ENCODE measurements at regions of chr3 and their contacts with region 1.

Region 1: DNA sequence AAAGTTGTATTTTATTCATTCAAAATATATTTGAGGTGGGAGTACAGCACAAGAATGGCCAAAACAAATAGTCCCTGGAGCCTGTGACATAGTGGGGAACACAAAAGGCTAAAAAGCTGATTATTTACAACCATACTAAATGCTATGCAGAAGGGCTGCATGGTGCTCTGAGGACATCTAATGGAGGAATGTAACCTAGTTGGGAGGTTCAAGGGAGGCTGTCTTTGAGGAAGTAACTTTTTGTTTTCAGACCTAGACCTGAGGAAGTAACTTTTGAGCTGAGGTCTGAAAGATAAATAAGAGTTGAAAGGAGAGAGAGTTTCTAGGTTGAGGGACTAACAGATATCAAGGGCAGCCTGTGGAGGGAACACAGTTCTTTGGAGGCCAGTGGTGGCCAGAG is 34.8 kb upstream of the RASA2 start:
- DNase-seq: no peak
- H3K4me3 ChIP-seq: no peak overlapping the region
- H3K27ac ChIP-seq: no peak overlapping the region
- H3K4me1 ChIP-seq: peaks cover 11% of the 10 kb centered on the region
- H3K27me3 ChIP-seq: no peaks in the 10 kb centered on the region
- CTCF ChIP-seq: peak; percentile 65

Region 2: DNA sequence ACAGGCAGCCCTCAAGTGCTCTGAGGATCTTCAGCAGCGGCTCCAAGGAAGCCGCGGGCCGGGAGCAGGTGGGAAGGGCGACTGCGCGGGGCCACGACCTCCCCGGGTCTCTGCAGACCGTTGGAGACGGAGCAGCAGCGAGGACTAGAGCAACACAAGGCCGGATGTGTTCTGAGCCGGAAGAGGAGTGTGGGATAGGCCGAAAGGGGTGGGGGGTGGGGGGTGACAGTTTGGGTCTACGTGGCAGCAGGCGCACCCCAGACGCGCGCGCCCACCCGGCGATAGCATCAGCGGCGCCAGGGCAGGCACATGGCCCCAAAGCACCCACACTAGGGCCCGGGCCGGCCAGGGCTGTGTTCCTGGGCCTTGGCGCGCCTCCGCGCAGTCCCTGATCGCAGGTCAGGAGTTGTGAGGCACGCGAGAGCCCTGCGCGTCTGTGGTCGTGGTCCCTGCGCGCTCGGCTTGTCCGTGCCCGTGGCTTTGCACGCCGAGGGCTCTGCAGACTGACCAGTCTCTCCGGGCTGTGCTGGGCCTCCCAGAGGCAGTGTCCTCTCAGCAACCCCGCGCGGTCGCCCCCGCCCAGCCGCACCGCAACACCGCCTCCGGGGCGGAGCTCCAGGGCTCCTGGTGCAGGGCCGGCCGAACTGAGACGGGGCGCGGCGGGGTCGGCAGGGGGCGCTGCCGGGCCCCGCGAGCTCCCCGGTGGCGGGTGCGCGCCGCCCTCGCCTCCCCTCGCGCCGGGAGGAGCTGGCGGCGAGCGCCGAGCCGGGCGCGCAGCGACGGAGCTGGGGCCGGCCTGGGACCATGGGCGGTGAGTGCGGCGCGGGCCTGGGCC is 220.7 kb before region 1 on chr3 and contains the start of gene PXYLP1:
- intact Hi-C with region 1: loop called (anchors 10 kb)
- DNase-seq: peak; percentile 95
- H3K4me3 ChIP-seq: peak within 1 kb of the TSS; percentile 84
- H3K27ac ChIP-seq: peak within 1 kb of the TSS; percentile 88
- H3K4me1 ChIP-seq: peaks cover 4% of the 10 kb centered on the region
- H3K27me3 ChIP-seq: no peaks in the 10 kb centered on the region
- CTCF ChIP-seq: peak; percentile 36
- total RNA-seq, gene PXYLP1: 8.9 to 13.1 TPM

Region 3: GRCh38 chr3:141255846-141256261 is 196.2 kb before region 1 on chr3:
- intact Hi-C with region 1: no loop called
- DNase-seq: no peak
- H3K4me3 ChIP-seq: no peak overlapping the region
- H3K27ac ChIP-seq: no peak overlapping the region
- H3K4me1 ChIP-seq: no peaks in the 10 kb centered on the region
- H3K27me3 ChIP-seq: no peaks in the 10 kb centered on the region
- CTCF ChIP-seq: no peak

Region 4: DNA sequence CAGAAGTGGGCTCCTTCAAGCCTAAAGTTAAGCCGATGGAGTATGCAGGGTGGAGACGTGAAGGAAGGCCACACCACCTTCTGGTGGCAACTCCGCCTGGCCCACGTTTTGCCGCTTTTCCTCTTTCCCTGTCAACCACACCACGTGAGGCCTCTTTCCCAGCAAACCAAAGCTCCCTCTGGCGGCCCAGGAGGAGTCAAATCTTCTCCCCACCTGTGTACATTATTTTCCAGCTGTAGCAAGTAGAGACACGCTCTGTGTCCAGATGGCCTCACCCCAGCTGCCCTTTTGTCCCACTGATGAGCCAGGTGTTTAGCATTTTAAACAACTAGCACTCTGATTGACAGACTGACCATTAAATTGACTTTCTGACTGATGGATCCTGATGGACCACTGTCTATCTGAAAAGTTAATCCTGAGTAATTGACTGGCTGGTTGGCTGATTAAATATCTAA is 143.4 kb before region 1 on chr3:
- intact Hi-C with region 1: loop called (anchors 5 kb)
- DNase-seq: peak; percentile 84
- H3K4me3 ChIP-seq: no peak overlapping the region
- H3K27ac ChIP-seq: no peak overlapping the region
- H3K4me1 ChIP-seq: no peaks in the 10 kb centered on the region
- H3K27me3 ChIP-seq: no peaks in the 10 kb centered on the region
- CTCF ChIP-seq: peak; percentile 27

Region 5: GRCh38 chr3:141355242-141355641 is 96.8 kb before region 1 on chr3:
- intact Hi-C with region 1: loop called (anchors 5 kb)
- DNase-seq: no peak
- H3K4me3 ChIP-seq: no peak overlapping the region
- H3K27ac ChIP-seq: no peak overlapping the region
- H3K4me1 ChIP-seq: no peaks in the 10 kb centered on the region
- H3K27me3 ChIP-seq: no peaks in the 10 kb centered on the region
- CTCF ChIP-seq: no peak

Measured in colonic mucosa (tissue), 4 donors.